Left lung (tissue), 14 donors: ENCODE measurements at regions of chr5 and their contacts with region 1.

Region 1: DNA sequence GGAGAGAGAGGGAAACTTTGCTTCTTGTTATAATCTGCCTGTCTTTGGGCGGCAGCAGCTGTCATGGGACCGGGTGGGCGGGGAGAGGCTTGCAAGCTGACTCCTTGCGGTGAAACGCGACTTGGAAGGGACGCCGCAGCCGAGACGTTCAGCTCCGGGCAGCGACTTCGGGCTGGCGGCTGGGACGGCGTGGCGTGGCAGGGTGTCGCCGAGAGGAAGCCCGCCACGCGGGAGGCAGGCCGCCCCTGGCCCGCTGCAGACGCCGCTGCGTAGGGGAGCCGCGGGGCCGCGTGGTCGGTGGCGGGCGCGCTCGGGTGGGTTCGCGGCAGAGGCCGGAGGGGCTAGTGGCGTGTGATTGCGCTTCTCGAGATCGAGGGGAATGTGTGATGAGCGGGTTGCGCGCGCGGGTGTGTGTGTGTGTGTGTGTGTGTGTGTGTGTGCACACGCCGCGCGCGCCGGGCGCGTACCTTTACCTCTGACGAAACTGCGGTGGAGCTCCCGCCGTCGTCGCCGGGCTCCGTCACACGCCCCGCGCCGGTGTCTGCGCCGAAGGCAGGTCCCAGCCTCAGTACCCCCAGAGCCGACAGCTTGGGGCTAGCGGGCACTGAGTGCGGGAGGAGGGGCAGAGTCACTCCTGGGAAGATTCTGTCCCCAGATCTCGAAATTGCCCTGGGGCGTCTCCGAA is 1.7 kb downstream of the PPARGC1B start:
- DNase-seq: peak; percentile 72 to 92 (median 90)
- ATAC-seq: peak; percentile 80
- H3K4me3 ChIP-seq: peak overlapping the region; percentile 84 to 92
- H3K27ac ChIP-seq: peak overlapping the region; percentile 70 to 73
- H3K4me1 ChIP-seq: peaks cover 0 to 33% of the 10 kb centered on the region in 2 donors
- H3K27me3 ChIP-seq: peaks cover 0 to 31% of the 10 kb centered on the region in 2 donors
- CTCF ChIP-seq: no peak

Region 2: DNA sequence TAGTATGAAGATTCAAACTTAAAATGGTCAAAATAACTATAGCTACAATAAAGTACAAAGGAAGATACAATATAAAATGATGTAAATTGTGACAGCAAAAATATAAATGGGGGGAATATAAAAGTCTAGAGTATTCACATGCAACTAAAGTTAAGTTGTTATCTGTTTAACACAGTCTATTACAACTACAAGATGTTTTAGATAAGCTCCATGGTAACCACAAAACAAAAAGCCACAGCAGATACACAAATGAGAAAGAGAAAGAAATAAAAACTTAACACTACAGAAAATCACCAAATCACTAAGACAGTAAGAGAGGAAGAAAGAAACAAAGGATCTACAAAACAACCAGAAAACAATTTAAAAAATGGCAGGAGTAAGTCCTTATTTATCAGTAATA is 651.9 kb before region 1 on chr5:
- intact Hi-C with region 1: no loop called
- DNase-seq: no peak
- ATAC-seq: no peak
- H3K4me3 ChIP-seq: no peak overlapping the region
- H3K27ac ChIP-seq: no peak overlapping the region
- H3K4me1 ChIP-seq: no peaks in the 10 kb centered on the region
- H3K27me3 ChIP-seq: no peaks in the 10 kb centered on the region
- CTCF ChIP-seq: no peak

Region 3: GRCh38 chr5:149809931-149810617 is 78.3 kb after region 1 on chr5:
- intact Hi-C with region 1: loop called in 1 of 2 experiments (anchors 10 kb)
- DNase-seq: peak in 2 of 4 donors; percentile 53 to 64
- ATAC-seq: peak; percentile 87
- H3K4me3 ChIP-seq: no peak overlapping the region
- H3K27ac ChIP-seq: no peak overlapping the region
- H3K4me1 ChIP-seq: peaks cover 0 to 12% of the 10 kb centered on the region in 2 donors
- H3K27me3 ChIP-seq: peaks cover 0 to 42% of the 10 kb centered on the region in 2 donors
- CTCF ChIP-seq: no peak